ENCODE measurements at regions of chr1 and their contacts with region 1.

Region 1: DNA sequence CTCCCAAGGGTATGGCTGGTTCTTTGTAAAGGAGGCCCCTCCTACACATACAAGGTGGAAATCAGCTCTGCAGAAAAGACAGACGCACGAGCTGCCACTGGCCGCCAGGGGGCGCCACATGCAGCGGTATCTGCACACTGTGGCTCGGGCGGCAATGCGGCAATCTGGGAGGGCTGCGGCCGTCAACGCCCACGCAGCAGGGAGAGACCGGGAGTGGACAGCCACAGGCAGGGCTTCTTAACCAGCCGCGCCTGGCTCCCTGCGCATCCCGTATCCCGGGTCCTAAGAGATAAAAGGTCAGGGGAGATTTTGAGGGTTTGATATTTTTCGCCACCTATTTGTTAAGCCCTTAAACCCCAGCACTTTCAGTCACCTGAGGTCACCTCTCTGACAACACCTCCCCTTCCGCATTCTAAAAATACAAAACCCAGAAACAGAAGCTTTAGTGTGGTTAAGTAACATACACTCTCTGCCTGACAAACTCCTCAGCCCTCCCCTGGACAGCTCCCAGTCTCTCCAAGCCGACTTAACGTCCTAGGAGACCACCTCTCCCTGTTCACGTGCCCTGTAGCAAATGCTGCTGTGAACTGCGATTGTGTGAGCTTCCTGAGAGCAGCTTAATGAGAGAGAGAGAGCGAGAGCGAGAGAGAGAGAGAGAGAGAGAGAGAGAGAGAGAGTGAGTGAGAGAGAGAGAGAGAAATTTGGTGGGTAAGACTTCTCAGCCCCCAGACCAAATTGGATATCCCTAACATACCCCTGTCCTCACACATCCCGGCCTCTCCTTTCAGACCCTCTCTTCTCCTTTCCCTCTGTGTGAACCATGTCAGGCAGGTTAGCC is 13.5 kb upstream of the KCNA2 start:
- DNase-seq: peak; percentile 94

Region 2: DNA sequence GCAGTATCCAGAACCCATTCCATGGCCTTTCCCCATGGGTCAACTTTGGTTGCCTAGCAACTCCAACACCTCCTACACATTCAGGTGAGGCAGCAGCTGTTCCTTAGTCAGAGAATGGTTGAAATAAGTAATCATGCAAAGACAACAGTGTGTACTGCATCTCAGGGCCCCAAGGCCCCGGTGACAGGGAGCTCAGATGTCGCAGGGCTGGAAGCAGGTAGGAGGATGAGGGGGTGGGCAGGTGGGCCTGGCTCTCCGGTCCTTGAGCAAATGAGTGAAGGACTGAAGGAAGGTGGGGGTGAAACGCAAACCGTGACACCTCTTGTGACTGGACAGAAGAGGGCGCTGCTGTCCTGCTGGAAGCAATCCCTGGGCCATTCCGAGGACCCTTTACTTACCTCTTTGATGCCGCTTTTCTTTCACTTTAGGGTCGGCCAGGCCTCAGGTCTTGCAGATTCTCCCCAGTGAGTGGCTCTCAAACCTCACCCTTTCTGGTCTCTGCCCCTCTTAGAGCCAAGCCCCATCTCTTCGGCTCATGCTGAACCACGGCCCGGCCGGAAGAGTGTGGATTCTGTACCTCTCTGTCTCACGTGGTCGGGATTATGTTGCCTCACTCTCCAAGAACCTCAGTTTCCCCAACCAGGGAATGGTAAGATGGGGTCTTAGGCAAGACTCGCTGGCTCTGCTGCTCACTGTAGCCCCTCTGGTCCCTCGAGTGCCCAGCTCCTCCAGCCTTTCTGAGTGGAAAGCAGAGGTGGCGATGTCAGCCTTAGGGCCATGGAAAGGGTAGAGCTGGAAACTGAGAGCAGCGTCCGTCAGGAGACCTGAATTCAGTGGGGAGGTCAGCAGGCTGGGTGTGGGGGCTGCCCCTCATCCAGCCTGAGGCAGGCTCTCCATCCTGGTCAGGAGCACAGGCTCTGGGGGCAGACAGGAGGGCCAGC is 95.0 kb before region 1 on chr1:
- intact Hi-C with region 1: loop called (anchors 10 kb)
- DNase-seq: no peak

Region 3: GRCh38 chr1:110554871-110555801 is 64.5 kb before region 1 on chr1:
- intact Hi-C with region 1: loop called in 1 of 2 experiments (anchors 5 kb)
- DNase-seq: no peak

Region 4: DNA sequence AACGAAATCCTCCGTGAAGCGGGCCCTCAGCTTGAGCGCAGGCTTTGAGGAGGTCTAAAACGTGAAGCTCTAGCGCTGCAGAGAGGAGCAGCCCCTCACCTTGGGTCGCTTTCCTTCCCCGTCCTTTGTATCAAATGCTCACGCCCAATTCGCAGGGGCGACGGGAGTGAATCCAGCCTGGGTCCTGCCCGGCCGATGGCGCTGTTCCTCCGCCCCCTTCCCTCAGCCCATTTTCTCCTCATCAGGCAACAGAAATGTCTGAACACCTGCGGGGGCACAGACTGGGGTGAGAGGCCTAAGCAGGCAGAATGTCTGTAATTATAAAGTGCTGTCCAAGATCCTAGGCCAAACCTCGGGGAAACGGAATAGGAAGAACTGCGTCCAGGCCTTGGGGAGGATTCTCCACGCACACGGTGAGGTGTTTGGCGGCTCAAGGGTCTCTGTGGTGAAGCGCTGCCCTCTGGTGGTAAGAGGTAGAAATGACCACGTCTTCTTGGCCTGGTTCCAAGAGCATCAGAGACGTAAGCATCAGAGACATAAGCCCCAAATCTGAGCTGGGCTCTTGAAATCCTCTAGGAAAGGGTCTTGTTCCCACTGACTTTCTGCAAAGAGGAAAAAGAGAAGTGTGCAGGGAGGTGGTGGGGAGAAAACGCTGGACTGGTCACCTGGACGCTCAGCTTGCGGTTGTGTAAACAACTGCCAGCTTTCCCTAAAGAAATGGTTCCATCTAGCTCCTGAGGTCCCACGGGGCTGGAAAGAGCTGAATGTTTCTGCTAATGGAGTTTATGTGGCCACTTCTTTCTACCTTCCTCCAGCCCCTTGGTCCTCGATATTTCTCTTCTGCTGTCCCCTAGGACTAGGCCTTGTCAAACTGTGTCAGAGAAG is 161.2 kb after region 1 on chr1:
- intact Hi-C with region 1: loop called in 1 of 2 experiments (anchors 10 kb)
- DNase-seq: no peak

Measured in posterior vena cava (tissue), 2 donors.